ENCODE measurements at regions of chr4 and their contacts with region 1.

Region 1: DNA sequence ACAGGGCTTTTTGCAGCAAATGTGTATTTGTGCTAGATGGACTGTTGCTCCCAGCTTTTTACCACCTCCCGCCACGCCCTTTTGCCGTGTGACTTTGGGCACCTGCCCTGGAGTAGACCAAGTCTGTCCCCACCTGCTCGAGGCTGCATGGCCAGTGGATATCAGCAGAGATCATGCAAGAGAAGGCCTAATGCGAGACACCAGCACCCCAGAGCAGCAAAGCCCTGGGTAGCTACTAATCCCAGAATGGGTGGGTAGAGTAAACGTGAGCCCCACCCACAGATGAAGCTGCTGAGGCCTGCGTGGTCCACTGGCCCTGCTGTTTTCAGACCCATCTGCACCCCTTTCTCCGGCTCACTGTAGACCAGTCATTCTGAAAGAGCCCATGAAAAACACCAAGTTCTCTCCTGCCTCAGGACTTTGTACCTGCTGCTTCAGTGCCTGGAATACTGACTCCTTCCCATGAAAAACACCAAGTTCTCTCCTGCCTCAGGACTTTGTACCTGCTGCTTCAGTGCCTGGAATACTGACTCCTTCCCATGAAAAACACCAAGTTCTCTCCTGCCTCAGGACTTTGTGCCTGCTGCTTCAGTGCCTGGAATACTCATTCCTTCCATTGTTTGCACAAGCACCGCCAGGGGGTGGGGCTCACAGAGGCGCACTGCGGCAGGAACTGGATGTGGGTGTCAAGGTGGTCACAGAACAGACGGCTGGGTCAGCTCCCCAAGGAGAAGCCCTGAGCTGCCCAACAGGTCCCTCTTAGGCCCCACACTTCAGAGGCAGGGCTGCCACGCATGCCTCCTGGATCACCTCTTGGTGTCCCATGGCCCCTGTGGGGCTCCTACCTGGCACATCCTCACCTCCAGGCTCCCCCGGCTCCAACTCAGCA is 5.1 kb upstream of the TNIP2 start:
- DNase-seq: no peak
- ATAC-seq: no peak
- H3K4me3 ChIP-seq: no peak overlapping the region
- H3K4me3 Mint-ChIP-seq: no peak overlapping the region
- H3K27ac ChIP-seq: no peak overlapping the region
- H3K27ac Mint-ChIP-seq: peak overlapping the region in 4 of 9 donors; percentile 14 to 71 (median 54)
- H3K4me1 ChIP-seq: peaks cover 0 to 4% of the 10 kb centered on the region in 2 donors
- H3K4me1 Mint-ChIP-seq: peaks cover 0 to 15% (median 5%) of the 10 kb centered on the region in 7 donors
- H3K27me3 ChIP-seq: no peaks in the 10 kb centered on the region
- H3K27me3 Mint-ChIP-seq: no peaks in the 10 kb centered on the region

Region 2: DNA sequence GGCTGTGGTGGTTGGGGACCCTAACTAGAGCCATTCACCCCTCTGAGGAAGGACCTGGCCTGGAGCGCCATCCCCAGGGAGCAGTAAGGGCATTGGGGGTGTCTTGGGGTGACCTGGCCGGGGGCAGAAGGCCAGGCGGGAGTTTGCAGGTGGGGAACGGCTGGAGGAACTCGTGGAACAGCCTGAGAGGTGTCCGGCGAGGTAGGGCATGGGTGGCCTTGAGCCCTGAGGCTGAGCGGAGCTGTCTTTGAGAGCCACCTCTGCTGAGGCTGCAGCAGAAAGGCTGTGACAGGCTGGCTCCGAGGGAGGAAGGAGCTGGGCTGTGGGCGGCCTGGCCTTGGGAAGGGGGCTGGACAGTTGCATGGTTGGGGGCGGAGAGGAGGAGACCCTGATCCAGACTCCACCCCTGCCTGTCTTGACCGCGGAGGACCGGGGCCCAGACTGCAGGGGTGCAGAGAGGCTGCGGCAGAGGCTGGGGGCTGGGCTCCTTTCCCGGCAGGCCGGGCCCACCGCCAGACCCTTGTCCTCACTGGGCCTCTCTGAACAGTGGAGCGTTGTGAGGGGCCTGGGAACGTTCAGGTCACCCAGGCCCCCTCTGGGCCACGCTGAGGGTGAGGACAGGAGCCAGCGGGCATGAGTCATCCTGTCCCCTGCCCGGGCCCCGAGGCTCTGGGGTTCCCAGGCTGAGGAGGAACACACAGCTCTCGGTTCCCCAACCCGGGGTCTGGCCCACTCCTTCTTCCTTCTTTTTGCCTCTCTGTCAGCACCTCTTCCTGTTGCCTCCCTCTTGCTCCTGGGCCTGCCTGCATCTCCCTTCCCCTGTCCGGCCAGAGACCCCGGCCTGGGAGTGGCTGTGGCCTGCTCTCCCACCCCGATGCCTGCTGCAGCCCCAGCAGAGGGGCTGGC is 39.7 kb after region 1 on chr4:
- CTCF ChIA-PET with region 1: no interaction called
- POLR2A ChIA-PET with region 1: no interaction called
- intact Hi-C with region 1: loop called in 1 of 2 experiments (anchors 5 kb)
- DNase-seq: peak in 2 of 9 donors; percentile 7 to 37
- ATAC-seq: peak; percentile 70
- H3K4me3 ChIP-seq: no peak overlapping the region
- H3K4me3 Mint-ChIP-seq: peak overlapping the region in 6 of 10 donors; percentile 13 to 96 (median 40)
- H3K27ac ChIP-seq: no peak overlapping the region
- H3K27ac Mint-ChIP-seq: peak overlapping the region in 8 of 9 donors; percentile 17 to 79 (median 41)
- H3K4me1 ChIP-seq: peaks cover 30 to 45% of the 10 kb centered on the region in 2 donors
- H3K4me1 Mint-ChIP-seq: peaks cover 25 to 47% (median 42%) of the 10 kb centered on the region in 7 donors
- H3K27me3 ChIP-seq: no peaks in the 10 kb centered on the region
- H3K27me3 Mint-ChIP-seq: no peaks in the 10 kb centered on the region

Region 3: GRCh38 chr4:2837904-2838496 is 76.7 kb after region 1 on chr4:
- CTCF ChIA-PET with region 1: no interaction called
- POLR2A ChIA-PET with region 1: interaction called, 3 read pairs
- intact Hi-C with region 1: loop called (anchors 1 kb)
- DNase-seq: peak in 7 of 9 donors; percentile 74 to 86 (median 83)
- ATAC-seq: peak; percentile 94
- H3K4me3 ChIP-seq: peak overlapping the region; percentile 66
- H3K4me3 Mint-ChIP-seq: peak overlapping the region; percentile 82 to 96 (median 88)
- H3K27ac ChIP-seq: peak overlapping the region; percentile 82
- H3K27ac Mint-ChIP-seq: peak overlapping the region; percentile 91 to 98 (median 94)
- H3K4me1 ChIP-seq: peaks cover 54 to 60% of the 10 kb centered on the region in 2 donors
- H3K4me1 Mint-ChIP-seq: peaks cover 48 to 83% (median 54%) of the 10 kb centered on the region in 7 donors
- H3K27me3 ChIP-seq: no peaks in the 10 kb centered on the region
- H3K27me3 Mint-ChIP-seq: no peaks in the 10 kb centered on the region

Region 4: GRCh38 chr4:2934813-2935761 is 173.8 kb after region 1 on chr4:
- CTCF ChIA-PET with region 1: no interaction called
- POLR2A ChIA-PET with region 1: no interaction called
- intact Hi-C with region 1: loop called (anchors 1 to 2 kb)
- DNase-seq: peak; percentile 90 to 99 (median 95)
- ATAC-seq: peak; percentile 81
- H3K4me3 ChIP-seq: peak overlapping the region; percentile 97
- H3K4me3 Mint-ChIP-seq: peak overlapping the region; percentile 76 to 91 (median 84)
- H3K27ac ChIP-seq: peak overlapping the region; percentile 92
- H3K27ac Mint-ChIP-seq: peak overlapping the region; percentile 67 to 91 (median 87)
- H3K4me1 ChIP-seq: peaks cover 38 to 46% of the 10 kb centered on the region in 2 donors
- H3K4me1 Mint-ChIP-seq: peaks cover 17 to 44% (median 37%) of the 10 kb centered on the region in 7 donors
- H3K27me3 ChIP-seq: no peaks in the 10 kb centered on the region
- H3K27me3 Mint-ChIP-seq: no peaks in the 10 kb centered on the region

Region 5: DNA sequence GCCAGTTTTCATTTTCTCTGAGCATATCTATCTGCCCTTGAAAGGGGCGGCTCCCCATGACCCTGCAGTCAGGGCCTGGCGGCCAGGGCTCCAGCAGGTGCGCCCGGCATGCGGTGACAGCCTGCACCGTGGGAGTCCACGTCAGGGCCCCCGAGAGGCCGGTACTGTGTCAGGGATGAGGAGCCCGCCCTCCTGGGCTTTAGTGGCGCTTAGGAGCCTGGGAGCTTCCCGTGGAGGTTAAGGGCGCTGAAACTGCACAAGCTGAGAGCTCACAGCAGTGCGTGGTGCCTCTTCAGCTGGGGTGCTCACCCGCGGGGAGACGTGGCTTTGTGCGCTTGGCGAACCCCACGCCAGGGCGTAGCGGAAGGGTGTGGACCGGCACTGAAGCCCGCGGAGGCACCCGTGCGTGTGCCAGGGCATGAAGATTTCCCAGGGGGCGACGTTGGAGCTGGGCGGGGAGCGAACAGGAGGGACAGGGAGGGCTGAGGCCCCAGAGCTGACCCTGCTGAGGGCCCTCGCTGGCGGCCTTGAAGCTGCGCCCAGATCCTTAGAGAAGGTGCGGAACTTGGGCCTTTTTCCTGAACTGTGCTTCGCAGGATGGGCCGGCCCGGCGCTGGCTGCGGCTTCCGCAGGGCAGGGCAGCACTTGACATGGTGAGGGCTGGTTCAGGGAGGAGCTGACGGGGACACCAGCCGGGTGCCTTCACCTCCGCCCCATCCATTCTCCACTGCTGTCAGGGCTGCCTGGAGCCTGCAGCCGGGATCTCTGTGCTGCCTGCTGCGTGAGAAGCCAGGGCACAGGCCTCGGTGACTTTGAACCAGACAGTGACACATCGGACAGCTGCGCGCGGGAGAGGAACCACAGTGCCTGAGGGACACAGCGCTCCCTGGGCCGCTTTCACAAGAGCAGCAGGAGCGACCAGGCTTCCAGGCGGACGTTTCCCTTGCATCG is 280.2 kb after region 1 on chr4:
- CTCF ChIA-PET with region 1: interaction called, 3 read pairs
- POLR2A ChIA-PET with region 1: interaction called, 3 read pairs
- intact Hi-C with region 1: loop called (anchors 1 to 5 kb)
- DNase-seq: peak in 8 of 9 donors; percentile 30 to 40 (median 36)
- ATAC-seq: peak; percentile 55
- H3K4me3 ChIP-seq: peak overlapping the region; percentile 66
- H3K4me3 Mint-ChIP-seq: peak overlapping the region; percentile 83 to 98 (median 89)
- H3K27ac ChIP-seq: peak overlapping the region; percentile 54
- H3K27ac Mint-ChIP-seq: peak overlapping the region in 8 of 9 donors; percentile 43 to 88 (median 84)
- H3K4me1 ChIP-seq: peaks cover 38 to 39% of the 10 kb centered on the region in 2 donors
- H3K4me1 Mint-ChIP-seq: peaks cover 40 to 72% (median 59%) of the 10 kb centered on the region in 7 donors
- H3K27me3 ChIP-seq: no peaks in the 10 kb centered on the region
- H3K27me3 Mint-ChIP-seq: peaks cover 0 to 6% (median 0%) of the 10 kb centered on the region in 5 donors

Measured in naive thymus-derived CD4-positive, alpha-beta T cell (primary cell).